ENCODE measurements at regions of chr5 and their contacts with region 1.

Region 1: GRCh38 chr5:2038321-2039179 is 155.8 kb upstream of the IRX4 start:
- DNase-seq: peak; percentile 26 to 78 (median 51)
- ATAC-seq: peak; percentile 82
- H3K4me3 ChIP-seq: peak overlapping the region; percentile 15 to 45
- H3K4me3 Mint-ChIP-seq: peak overlapping the region; percentile 72
- H3K27ac ChIP-seq: no peak overlapping the region
- H3K27ac Mint-ChIP-seq: no peak overlapping the region
- H3K4me1 ChIP-seq: no peaks in the 10 kb centered on the region
- H3K4me1 Mint-ChIP-seq: no peaks in the 10 kb centered on the region
- H3K27me3 ChIP-seq: peaks cover 3 to 7% of the 10 kb centered on the region in 2 experiments
- H3K27me3 Mint-ChIP-seq: peaks cover 34% of the 10 kb centered on the region
- CTCF ChIP-seq: peak; percentile 79

Region 2: DNA sequence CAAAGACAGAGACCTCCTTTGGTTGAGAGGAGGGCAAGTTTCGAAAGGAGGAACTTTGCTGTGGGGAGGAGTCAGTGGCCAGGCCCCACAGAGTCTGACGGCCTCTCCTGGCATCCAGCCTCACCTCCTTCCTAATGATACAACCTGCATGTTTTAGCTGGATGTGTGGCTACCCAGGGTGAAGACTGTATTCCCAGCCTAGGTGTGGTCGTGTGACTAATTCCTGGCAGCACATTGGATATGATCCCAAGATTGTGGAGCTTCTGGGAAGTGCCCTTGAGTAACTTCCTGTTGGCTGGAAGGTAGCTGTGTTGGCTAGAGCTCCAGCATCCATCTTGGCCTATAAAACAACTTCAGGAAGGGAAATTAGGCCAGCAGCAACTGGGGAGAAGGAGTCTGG is 495.8 kb before region 1 on chr5:
- CTCF ChIA-PET with region 1: no interaction called
- POLR2A ChIA-PET with region 1: no interaction called
- intact Hi-C with region 1: no loop called
- DNase-seq: peak in 1 of 9 experiments; percentile 6
- ATAC-seq: no peak
- H3K4me3 ChIP-seq: no peak overlapping the region
- H3K4me3 Mint-ChIP-seq: no peak overlapping the region
- H3K27ac ChIP-seq: no peak overlapping the region
- H3K27ac Mint-ChIP-seq: no peak overlapping the region
- H3K4me1 ChIP-seq: no peaks in the 10 kb centered on the region
- H3K4me1 Mint-ChIP-seq: no peaks in the 10 kb centered on the region
- H3K27me3 ChIP-seq: no peaks in the 10 kb centered on the region
- H3K27me3 Mint-ChIP-seq: no peaks in the 10 kb centered on the region
- CTCF ChIP-seq: no peak

Region 3: DNA sequence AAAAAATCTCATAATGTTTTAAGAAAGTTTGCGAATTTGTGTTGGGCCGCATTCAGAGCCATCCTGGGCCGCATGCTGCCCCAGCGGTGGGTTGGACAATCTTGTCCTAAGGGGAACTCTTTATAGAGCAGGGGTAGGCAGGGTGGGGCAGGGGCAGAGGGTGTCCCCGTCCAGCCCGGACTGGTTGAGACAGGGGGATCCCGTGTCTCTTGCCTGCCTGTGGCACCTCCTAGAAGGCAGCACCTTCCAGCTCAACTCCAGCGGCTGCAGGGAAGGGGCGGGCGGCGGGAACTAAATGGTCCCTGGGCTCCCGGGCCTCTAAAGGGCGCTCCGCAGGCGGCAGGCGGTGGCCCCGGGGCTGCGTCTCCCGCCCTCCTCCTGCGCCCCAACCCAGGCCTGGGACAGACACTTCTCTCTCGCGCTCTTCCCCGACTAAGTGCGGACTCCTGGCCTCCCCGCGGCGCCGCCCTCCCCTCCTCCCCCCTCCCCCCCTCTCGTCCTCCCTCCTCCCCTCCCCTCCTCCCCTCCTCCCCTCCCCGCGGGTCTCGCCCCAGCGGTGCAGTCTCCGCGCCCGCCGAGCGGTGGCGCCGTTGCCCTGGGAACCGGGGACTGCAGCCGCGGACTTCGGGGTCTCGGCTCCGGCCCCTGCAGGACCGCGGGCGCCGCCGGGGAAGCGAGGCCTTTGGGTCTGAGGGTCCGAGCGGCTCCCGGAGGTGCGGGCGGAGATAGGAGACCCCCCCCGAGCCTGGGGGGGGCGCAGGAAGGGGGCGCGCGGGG is 371.6 kb before region 1 on chr5:
- CTCF ChIA-PET with region 1: interaction called, 3 read pairs
- POLR2A ChIA-PET with region 1: no interaction called
- intact Hi-C with region 1: loop called (anchors 2 to 5 kb)
- DNase-seq: peak in 8 of 9 experiments; percentile 26 to 67 (median 52)
- ATAC-seq: peak; percentile 74
- H3K4me3 ChIP-seq: no peak overlapping the region
- H3K4me3 Mint-ChIP-seq: peak overlapping the region; percentile 35
- H3K27ac ChIP-seq: no peak overlapping the region
- H3K27ac Mint-ChIP-seq: no peak overlapping the region
- H3K4me1 ChIP-seq: peaks cover 12% of the 10 kb centered on the region
- H3K4me1 Mint-ChIP-seq: peaks cover 20% of the 10 kb centered on the region
- H3K27me3 ChIP-seq: peaks cover 13 to 31% of the 10 kb centered on the region in 2 experiments
- H3K27me3 Mint-ChIP-seq: peaks cover 61% of the 10 kb centered on the region
- CTCF ChIP-seq: peak; percentile 38

Region 4: GRCh38 chr5:1763548-1763911 is 275.0 kb before region 1 on chr5:
- CTCF ChIA-PET with region 1: interaction called, 15 read pairs
- POLR2A ChIA-PET with region 1: no interaction called
- intact Hi-C with region 1: loop called in 1 of 2 experiments (anchors 5 kb)
- DNase-seq: peak in 6 of 9 experiments; percentile 17 to 61 (median 48)
- ATAC-seq: no peak
- H3K4me3 ChIP-seq: no peak overlapping the region
- H3K4me3 Mint-ChIP-seq: no peak overlapping the region
- H3K27ac ChIP-seq: no peak overlapping the region
- H3K27ac Mint-ChIP-seq: no peak overlapping the region
- H3K4me1 ChIP-seq: no peaks in the 10 kb centered on the region
- H3K4me1 Mint-ChIP-seq: no peaks in the 10 kb centered on the region
- H3K27me3 ChIP-seq: no peaks in the 10 kb centered on the region
- H3K27me3 Mint-ChIP-seq: peaks cover 14% of the 10 kb centered on the region
- CTCF ChIP-seq: peak; percentile 58